ENCODE measurements at regions of chr10 and their contacts with region 1.

Region 1: DNA sequence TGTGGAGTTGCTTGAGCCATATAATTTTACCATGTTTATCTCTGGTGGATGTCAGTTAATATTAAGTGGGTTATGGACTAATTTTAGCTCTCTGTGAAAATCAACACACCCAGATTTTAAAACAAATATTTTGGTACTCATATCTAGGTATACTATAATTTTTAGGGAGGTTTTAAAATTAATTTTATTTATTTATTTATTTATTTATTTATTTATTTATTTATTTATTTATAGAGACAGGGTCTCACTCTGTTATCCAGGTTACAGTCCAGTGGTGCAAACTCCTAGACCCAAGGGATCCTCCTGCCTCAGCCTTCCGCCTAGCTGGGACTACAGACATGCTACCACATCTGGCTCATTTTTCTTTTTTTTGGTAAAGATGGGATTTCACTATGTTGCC is 7.3 kb upstream of the CREM start:
- DNase-seq: no peak
- ATAC-seq: no peak
- H3K4me3 ChIP-seq: no peak overlapping the region
- H3K4me3 Mint-ChIP-seq: no peak overlapping the region
- H3K27ac ChIP-seq: no peak overlapping the region
- H3K27ac Mint-ChIP-seq: no peak overlapping the region
- H3K4me1 ChIP-seq: no peaks in the 10 kb centered on the region
- H3K4me1 Mint-ChIP-seq: peaks cover 2% of the 10 kb centered on the region
- H3K27me3 ChIP-seq: no peaks in the 10 kb centered on the region
- H3K27me3 Mint-ChIP-seq: no peaks in the 10 kb centered on the region
- CTCF ChIP-seq: no peak

Region 2: DNA sequence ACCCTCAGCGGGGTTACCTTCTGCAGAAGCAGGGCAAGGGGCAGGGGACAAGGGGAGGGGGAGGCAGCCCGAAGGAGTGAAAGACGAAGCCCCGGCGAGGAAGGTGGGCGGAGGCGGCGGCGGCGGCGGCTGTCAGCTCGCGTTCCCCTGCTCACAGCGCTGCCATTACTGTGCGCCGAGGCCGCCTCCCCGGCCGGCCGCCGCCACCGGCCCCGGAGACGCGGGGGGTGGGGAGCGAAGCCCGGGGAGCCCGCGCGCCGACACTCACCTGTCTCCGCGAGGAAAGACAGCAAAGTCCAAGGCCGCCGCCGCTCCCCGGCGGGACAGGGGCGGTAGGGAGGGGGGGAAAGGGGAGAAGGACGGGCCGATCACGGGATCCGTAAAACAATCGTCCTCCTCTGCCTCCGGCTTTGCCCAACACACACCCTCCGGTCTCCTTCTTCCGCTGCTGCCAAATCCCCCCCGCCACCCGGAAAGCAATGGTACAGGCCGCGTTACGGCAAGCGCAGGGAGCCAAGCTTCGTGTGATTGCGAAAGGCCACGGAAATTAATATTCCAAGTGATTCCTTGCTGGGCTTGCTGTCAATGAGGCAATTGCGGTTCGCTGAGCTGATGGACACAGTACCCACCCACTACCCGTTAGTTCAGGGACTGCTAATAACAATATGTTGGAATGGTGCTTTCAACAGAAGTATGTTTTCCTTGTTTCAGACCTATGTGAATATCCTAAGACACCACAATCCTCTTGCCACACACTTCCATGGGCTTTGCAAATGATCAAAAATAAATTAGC is 29.0 kb before region 1 on chr10 and contains the start of gene CUL2:
- CTCF ChIA-PET with region 1: interaction called, 15 read pairs
- POLR2A ChIA-PET with region 1: no interaction called
- intact Hi-C with region 1: no loop called
- DNase-seq: peak; percentile 98
- ATAC-seq: peak; percentile 95
- H3K4me3 ChIP-seq: peak within 1 kb of the TSS; percentile 62 to 92 (median 80)
- H3K4me3 Mint-ChIP-seq: peak within 1 kb of the TSS; percentile 89
- H3K27ac ChIP-seq: peak within 1 kb of the TSS; percentile 95 to 98
- H3K27ac Mint-ChIP-seq: peak within 1 kb of the TSS; percentile 95
- H3K4me1 ChIP-seq: peaks cover 29 to 31% of the 10 kb centered on the region in 2 donors
- H3K4me1 Mint-ChIP-seq: peaks cover 50% of the 10 kb centered on the region
- H3K27me3 ChIP-seq: no peaks in the 10 kb centered on the region
- H3K27me3 Mint-ChIP-seq: no peaks in the 10 kb centered on the region
- CTCF ChIP-seq: no peak
- total RNA-seq, gene CUL2: 36.9 and 41.9 TPM in 2 replicates

Region 3: DNA sequence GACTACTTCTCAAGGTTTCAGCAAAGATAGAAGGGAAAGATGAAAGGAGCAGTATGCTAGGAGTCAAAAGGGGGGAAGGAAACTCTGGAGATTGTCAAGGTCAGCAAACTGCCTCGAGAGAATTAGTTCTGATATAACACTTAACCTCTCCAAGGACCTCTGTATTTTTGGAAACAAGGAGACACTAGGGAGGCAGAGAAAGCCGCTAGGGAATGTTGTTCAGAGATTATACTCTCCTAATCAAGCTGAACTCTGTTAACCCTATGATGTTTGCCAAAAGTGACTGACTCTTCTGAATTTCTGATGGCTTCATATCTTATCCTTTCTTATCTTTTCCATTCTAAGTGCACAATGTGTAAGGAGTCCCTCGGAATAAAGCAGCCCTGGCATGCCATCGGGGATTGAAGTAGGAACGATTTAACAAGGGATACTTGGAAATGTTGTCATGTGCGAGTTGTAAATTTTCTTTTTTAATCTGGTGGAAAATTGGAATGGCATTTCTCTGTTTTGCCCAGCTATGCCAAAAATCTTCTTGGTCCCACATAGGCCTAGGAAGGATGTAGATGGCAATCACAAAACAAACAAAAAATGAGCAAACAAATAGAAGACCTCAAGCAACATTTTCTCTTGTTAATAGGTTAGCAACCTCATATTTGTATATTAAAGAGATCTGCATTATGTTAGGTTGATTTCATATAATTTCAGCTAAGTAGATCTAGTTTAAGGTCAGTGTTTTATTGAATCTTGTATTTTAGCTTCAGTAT is 34.5 kb after region 1 on chr10:
- CTCF ChIA-PET with region 1: interaction called, 11 read pairs
- POLR2A ChIA-PET with region 1: no interaction called
- intact Hi-C with region 1: no loop called
- DNase-seq: no peak
- ATAC-seq: no peak
- H3K4me3 ChIP-seq: no peak overlapping the region
- H3K4me3 Mint-ChIP-seq: no peak overlapping the region
- H3K27ac ChIP-seq: no peak overlapping the region
- H3K27ac Mint-ChIP-seq: no peak overlapping the region
- H3K4me1 ChIP-seq: peaks cover 20 to 22% of the 10 kb centered on the region in 2 donors
- H3K4me1 Mint-ChIP-seq: peaks cover 26% of the 10 kb centered on the region
- H3K27me3 ChIP-seq: no peaks in the 10 kb centered on the region
- H3K27me3 Mint-ChIP-seq: no peaks in the 10 kb centered on the region
- CTCF ChIP-seq: no peak

Region 4: DNA sequence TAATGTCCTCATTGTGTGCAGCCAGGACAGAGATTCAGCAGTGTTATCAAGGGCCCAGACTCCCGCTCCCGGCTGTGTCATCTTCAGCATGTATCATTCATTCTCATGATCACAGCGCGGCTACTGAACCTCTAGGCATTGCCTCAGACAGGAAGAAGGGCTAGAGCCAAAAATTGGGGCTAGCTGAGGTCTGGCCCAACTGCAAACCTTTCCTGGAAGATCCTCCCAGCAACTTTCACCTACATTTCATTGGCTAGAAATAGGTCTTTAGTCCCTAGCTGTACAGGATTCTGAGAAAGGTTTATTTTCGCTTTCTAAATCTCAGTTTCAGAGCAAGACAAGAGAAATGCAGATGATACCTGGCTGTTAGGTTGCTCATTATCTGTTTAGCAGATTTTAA is 89.2 kb after region 1 on chr10:
- CTCF ChIA-PET with region 1: interaction called, 436 read pairs
- POLR2A ChIA-PET with region 1: no interaction called
- intact Hi-C with region 1: no loop called
- DNase-seq: no peak
- ATAC-seq: no peak
- H3K4me3 ChIP-seq: no peak overlapping the region
- H3K4me3 Mint-ChIP-seq: no peak overlapping the region
- H3K27ac ChIP-seq: no peak overlapping the region
- H3K27ac Mint-ChIP-seq: peak overlapping the region; percentile 10
- H3K4me1 ChIP-seq: no peaks in the 10 kb centered on the region
- H3K4me1 Mint-ChIP-seq: peaks cover 7% of the 10 kb centered on the region
- H3K27me3 ChIP-seq: no peaks in the 10 kb centered on the region
- H3K27me3 Mint-ChIP-seq: no peaks in the 10 kb centered on the region
- CTCF ChIP-seq: no peak

Region 5: DNA sequence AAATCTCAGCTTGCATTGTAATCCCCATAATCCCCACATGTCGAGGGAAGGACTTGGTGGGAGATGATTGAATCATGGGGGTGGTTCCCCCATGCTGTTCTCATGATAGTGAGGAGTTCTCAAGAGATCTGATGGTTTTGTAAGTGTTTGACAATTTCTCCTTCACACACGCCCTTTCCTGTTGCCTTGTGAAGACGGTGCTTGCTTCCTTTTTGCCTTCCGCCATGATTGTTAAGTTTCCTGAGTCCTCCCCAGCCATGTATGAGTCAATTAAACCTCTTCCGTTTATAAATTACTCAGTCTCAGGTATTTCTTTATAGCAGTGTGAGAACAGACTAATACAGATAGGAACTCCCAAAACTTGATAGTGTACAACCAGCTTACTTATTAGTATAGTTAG is 105.8 kb after region 1 on chr10:
- CTCF ChIA-PET with region 1: interaction called, 436 read pairs
- POLR2A ChIA-PET with region 1: no interaction called
- intact Hi-C with region 1: no loop called
- DNase-seq: no peak
- ATAC-seq: no peak
- H3K4me3 ChIP-seq: no peak overlapping the region
- H3K4me3 Mint-ChIP-seq: no peak overlapping the region
- H3K27ac ChIP-seq: no peak overlapping the region
- H3K27ac Mint-ChIP-seq: no peak overlapping the region
- H3K4me1 ChIP-seq: no peaks in the 10 kb centered on the region
- H3K4me1 Mint-ChIP-seq: no peaks in the 10 kb centered on the region
- H3K27me3 ChIP-seq: peaks cover 0 to 2% (median 0%) of the 10 kb centered on the region in 4 experiments
- H3K27me3 Mint-ChIP-seq: peaks cover 5% of the 10 kb centered on the region
- CTCF ChIP-seq: no peak

Region 6: GRCh38 chr10:35236739-35237138 is 117.4 kb after region 1 on chr10:
- CTCF ChIA-PET with region 1: interaction called, 17 read pairs
- POLR2A ChIA-PET with region 1: no interaction called
- intact Hi-C with region 1: loop called (anchors 1 kb)
- DNase-seq: no peak
- ATAC-seq: no peak
- H3K4me3 ChIP-seq: no peak overlapping the region
- H3K4me3 Mint-ChIP-seq: no peak overlapping the region
- H3K27ac ChIP-seq: no peak overlapping the region
- H3K27ac Mint-ChIP-seq: no peak overlapping the region
- H3K4me1 ChIP-seq: no peaks in the 10 kb centered on the region
- H3K4me1 Mint-ChIP-seq: no peaks in the 10 kb centered on the region
- H3K27me3 ChIP-seq: no peaks in the 10 kb centered on the region
- H3K27me3 Mint-ChIP-seq: no peaks in the 10 kb centered on the region
- CTCF ChIP-seq: no peak

Region 7: GRCh38 chr10:35276889-35277288 is 157.5 kb after region 1 on chr10:
- CTCF ChIA-PET with region 1: no interaction called
- POLR2A ChIA-PET with region 1: no interaction called
- intact Hi-C with region 1: no loop called
- DNase-seq: no peak
- ATAC-seq: no peak
- H3K4me3 ChIP-seq: no peak overlapping the region
- H3K4me3 Mint-ChIP-seq: no peak overlapping the region
- H3K27ac ChIP-seq: no peak overlapping the region
- H3K27ac Mint-ChIP-seq: no peak overlapping the region
- H3K4me1 ChIP-seq: no peaks in the 10 kb centered on the region
- H3K4me1 Mint-ChIP-seq: no peaks in the 10 kb centered on the region
- H3K27me3 ChIP-seq: peaks cover 0 to 3% (median 0%) of the 10 kb centered on the region in 4 experiments
- H3K27me3 Mint-ChIP-seq: peaks cover 4% of the 10 kb centered on the region
- CTCF ChIP-seq: no peak

Region 8: DNA sequence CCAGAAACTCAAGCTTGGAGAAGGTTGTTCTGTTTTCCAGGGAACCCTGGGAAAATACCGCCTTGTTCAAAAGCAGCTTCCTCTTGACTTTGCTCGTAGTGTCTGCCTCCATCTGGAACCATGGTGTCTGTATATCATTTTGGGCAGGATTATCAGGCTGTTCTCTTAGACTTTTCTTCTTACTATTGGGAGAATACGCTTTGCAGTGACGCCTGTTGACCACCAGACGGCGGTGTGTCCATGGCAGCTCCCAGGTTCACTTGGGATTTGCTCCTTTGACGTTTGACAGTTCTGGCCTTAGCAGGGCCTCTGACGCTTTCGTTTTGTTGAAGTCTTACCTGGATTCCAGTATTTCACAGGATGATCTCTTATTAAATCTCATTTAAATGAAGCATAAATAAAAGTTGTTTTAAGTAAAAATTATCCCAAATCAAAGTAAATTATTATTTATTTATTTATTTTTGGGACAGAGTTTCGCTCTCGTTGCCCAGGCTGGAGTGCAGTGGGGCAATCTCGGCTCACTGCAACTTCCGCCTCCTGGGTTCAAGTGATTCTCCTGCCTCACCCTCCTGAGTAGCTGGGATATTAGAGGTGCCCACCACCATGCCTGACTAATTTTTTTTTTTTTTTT is 444.0 kb after region 1 on chr10:
- CTCF ChIA-PET with region 1: interaction called, 14 read pairs
- POLR2A ChIA-PET with region 1: no interaction called
- intact Hi-C with region 1: loop called (anchors 2 kb)
- DNase-seq: peak; percentile 66
- ATAC-seq: peak; percentile 54
- H3K4me3 ChIP-seq: no peak overlapping the region
- H3K4me3 Mint-ChIP-seq: no peak overlapping the region
- H3K27ac ChIP-seq: no peak overlapping the region
- H3K27ac Mint-ChIP-seq: no peak overlapping the region
- H3K4me1 ChIP-seq: peaks cover 12 to 20% of the 10 kb centered on the region in 2 donors
- H3K4me1 Mint-ChIP-seq: peaks cover 19% of the 10 kb centered on the region
- H3K27me3 ChIP-seq: no peaks in the 10 kb centered on the region
- H3K27me3 Mint-ChIP-seq: no peaks in the 10 kb centered on the region
- CTCF ChIP-seq: peak; percentile 98

Region 9: GRCh38 chr10:36324831-36325387 is 1205.5 kb after region 1 on chr10:
- CTCF ChIA-PET with region 1: no interaction called
- POLR2A ChIA-PET with region 1: no interaction called
- intact Hi-C with region 1: no loop called
- DNase-seq: no peak
- ATAC-seq: no peak
- H3K4me3 ChIP-seq: no peak overlapping the region
- H3K4me3 Mint-ChIP-seq: no peak overlapping the region
- H3K27ac ChIP-seq: no peak overlapping the region
- H3K27ac Mint-ChIP-seq: no peak overlapping the region
- H3K4me1 ChIP-seq: no peaks in the 10 kb centered on the region
- H3K4me1 Mint-ChIP-seq: no peaks in the 10 kb centered on the region
- H3K27me3 ChIP-seq: no peaks in the 10 kb centered on the region
- H3K27me3 Mint-ChIP-seq: no peaks in the 10 kb centered on the region
- CTCF ChIP-seq: no peak